Caco-2 (cell line): ENCODE measurements at regions of chr2 and their contacts with region 1.

Region 1: DNA sequence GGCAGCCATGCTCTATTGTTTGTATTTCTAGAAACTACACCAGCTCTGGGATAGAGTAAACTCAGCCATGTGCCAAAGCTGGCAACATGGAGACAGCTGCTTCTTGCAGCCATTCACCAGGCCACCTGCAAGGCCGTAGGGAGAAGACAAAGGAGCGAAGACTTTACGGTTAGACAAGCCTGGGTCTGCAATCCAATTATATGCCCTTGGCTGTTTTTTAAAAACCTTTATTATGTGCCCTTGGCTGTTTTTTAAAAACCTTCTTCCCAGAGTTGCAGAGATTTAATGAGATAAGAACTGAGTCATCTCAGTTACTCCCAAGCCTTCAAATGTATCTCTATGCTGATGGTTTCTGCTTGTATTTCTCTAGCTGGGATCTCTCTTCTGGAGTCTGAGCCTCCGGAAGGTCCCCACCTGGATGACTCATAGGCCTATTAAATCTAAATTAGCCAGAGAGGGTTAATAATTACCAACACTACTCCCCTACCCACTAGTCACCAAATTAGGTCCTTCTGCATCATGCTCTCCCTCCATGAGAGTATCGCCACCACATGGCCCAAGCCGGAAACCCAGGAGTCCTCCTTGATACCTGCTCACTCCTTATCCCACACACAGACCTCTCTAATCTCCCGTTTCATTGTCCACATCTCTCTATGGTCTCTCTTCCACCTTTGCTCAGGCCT is 17.5 kb upstream of the DPP4 start:
- DNase-seq: peak; percentile 85 to 91
- H3K4me3 ChIP-seq: no peak overlapping the region
- H3K4me3 Mint-ChIP-seq: no peak overlapping the region
- H3K27ac Mint-ChIP-seq: peak overlapping the region; percentile 11
- H3K4me1 ChIP-seq: peaks cover 48% of the 10 kb centered on the region
- H3K4me1 Mint-ChIP-seq: peaks cover 40% of the 10 kb centered on the region
- H3K27me3 ChIP-seq: no peaks in the 10 kb centered on the region
- H3K27me3 Mint-ChIP-seq: no peaks in the 10 kb centered on the region
- CTCF ChIP-seq: peak in 1 of 2 experiments; percentile 88

Region 2: GRCh38 chr2:162007447-162008040 is 83.9 kb before region 1 on chr2:
- CTCF ChIA-PET with region 1: no interaction called
- POLR2A ChIA-PET with region 1: no interaction called
- intact Hi-C with region 1: loop called (anchors 2 kb)
- DNase-seq: no peak
- H3K4me3 ChIP-seq: no peak overlapping the region
- H3K4me3 Mint-ChIP-seq: no peak overlapping the region
- H3K27ac Mint-ChIP-seq: no peak overlapping the region
- H3K4me1 ChIP-seq: no peaks in the 10 kb centered on the region
- H3K4me1 Mint-ChIP-seq: peaks cover 11% of the 10 kb centered on the region
- H3K27me3 ChIP-seq: no peaks in the 10 kb centered on the region
- H3K27me3 Mint-ChIP-seq: no peaks in the 10 kb centered on the region
- CTCF ChIP-seq: peak; percentile 39 to 63

Region 3: DNA sequence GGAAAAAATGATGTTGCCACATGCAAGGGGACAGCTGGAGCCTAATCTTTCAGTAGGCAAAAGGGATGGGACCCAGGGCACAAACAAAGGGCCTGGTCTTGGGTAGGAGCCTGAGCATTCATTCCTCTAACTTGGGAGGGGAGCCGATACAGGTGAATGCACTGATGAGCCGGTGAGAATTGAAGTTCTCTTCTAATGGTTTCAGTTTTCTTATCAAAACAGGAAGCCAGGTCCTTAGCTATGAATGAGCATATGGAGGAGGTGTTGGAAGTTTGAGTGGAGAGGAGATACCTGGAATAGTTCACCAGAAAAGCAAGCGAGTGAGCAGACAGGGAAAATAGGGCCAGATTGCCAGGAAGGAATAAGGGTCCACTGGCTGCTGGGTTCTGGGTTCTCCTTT is 27.6 kb before region 1 on chr2:
- CTCF ChIA-PET with region 1: interaction called, 7 read pairs
- POLR2A ChIA-PET with region 1: no interaction called
- intact Hi-C with region 1: loop called (anchors 1 kb)
- DNase-seq: no peak
- H3K4me3 ChIP-seq: no peak overlapping the region
- H3K4me3 Mint-ChIP-seq: peak overlapping the region; percentile 14
- H3K27ac Mint-ChIP-seq: peak overlapping the region; percentile 2
- H3K4me1 ChIP-seq: peaks cover 42% of the 10 kb centered on the region
- H3K4me1 Mint-ChIP-seq: peaks cover 53% of the 10 kb centered on the region
- H3K27me3 ChIP-seq: no peaks in the 10 kb centered on the region
- H3K27me3 Mint-ChIP-seq: no peaks in the 10 kb centered on the region
- CTCF ChIP-seq: no peak

Region 4: GRCh38 chr2:162107361-162107901 is 16.0 kb after region 1 on chr2:
- CTCF ChIA-PET with region 1: no interaction called
- POLR2A ChIA-PET with region 1: no interaction called
- intact Hi-C with region 1: loop called (anchors 1 kb)
- DNase-seq: peak in 1 of 2 experiments; percentile 55
- H3K4me3 ChIP-seq: no peak overlapping the region
- H3K4me3 Mint-ChIP-seq: peak overlapping the region; percentile 21
- H3K27ac Mint-ChIP-seq: peak overlapping the region; percentile 73
- H3K4me1 ChIP-seq: peaks cover 60% of the 10 kb centered on the region
- H3K4me1 Mint-ChIP-seq: peaks cover 30% of the 10 kb centered on the region
- H3K27me3 ChIP-seq: no peaks in the 10 kb centered on the region
- H3K27me3 Mint-ChIP-seq: no peaks in the 10 kb centered on the region
- CTCF ChIP-seq: no peak

Region 5: DNA sequence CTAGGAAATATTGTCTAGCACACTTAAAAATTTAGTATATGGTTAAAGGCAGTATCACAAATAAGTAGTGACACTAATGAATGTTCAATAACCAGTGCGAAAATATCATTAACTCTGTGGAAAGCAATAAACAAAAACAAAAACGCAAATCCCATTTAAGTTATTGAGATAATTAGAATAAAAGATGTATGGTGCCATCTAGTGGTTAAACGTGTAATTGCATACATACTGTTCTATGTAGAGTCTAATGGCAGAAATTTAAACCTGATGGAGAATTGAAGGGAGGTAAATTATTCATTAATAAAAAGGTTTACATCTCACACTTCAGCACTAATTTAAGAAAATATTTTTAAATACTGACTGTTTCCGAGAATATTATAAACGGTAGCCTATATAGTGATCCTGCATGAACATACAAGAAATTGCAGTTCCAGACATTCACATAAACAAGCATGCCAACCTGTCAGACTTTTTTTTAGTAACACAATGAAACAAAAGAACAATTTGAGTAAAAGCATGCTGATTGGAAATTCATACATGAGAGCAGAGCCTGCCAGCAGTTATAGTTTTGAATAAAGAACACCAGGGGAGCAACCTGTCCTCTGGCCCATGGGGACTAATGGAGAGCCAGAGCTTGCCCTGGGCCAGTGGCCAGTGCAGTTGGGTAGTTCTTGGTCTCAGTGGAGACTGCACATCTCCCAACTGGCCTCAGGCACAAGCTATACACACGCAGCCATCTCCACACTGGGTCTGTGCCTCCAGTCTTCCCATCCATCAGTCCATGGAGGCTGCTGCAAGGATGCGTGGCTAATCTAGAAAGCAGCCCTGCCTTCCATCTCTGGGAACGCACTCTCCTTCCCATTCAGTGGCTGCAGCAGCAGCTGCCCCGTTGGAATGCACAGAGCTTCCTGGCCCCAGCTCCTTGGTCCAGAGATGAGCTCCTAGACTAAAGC is 32.6 kb after region 1 on chr2:
- CTCF ChIA-PET with region 1: interaction called, 5 read pairs
- POLR2A ChIA-PET with region 1: no interaction called
- intact Hi-C with region 1: loop called (anchors 1 kb)
- DNase-seq: peak in 1 of 2 experiments; percentile 60
- H3K4me3 ChIP-seq: no peak overlapping the region
- H3K4me3 Mint-ChIP-seq: no peak overlapping the region
- H3K27ac Mint-ChIP-seq: no peak overlapping the region
- H3K4me1 ChIP-seq: peaks cover 27% of the 10 kb centered on the region
- H3K4me1 Mint-ChIP-seq: peaks cover 18% of the 10 kb centered on the region
- H3K27me3 ChIP-seq: no peaks in the 10 kb centered on the region; the same call in 1 of the 2 replicates
- H3K27me3 Mint-ChIP-seq: no peaks in the 10 kb centered on the region
- CTCF ChIP-seq: peak; percentile 52 to 53